Left cardiac atrium (tissue), 4 donors: ENCODE measurements at regions of chr1 and their contacts with region 1.

Region 1: GRCh38 chr1:36285448-36286101 is 20.6 kb upstream of the SH3D21 start:
- DNase-seq: peak; percentile 63
- ATAC-seq: peak; percentile 78 to 88

Region 2: DNA sequence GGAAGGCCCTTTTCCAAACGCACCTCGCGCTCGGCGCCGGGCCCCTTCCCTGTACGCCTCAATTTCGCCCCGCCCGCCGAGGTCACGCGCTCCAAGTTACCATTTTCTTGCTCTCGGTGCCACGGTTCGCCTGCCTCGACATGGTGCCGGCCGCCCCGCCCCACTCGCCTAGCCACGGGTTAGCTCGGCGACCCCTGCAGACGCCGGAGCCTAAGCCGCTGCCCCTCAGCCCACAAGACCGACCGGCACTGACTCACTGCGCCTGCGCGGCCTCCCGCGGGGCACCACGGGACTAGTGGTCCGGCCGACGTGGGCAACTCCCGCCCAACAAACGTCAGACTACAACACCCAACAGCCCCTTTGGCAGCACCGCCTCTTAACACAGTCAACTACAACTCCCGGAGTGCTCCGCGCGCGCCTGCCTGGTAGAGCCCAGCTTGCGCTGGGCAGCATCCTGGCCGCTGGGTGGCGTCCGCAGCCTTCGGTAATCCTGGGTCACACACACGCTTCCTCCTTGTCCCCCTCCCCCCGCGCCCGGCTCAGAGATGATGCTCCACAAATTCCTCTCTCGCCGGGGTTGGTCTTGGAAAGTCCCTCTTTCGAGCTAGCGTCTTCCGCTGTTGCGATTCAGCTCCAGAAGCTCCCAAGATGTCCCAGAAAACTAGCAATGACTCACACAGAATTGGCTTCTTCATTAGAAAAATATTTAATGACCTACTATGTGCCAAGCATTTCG is 136.2 kb before region 1 on chr1 and contains the start of gene TRAPPC3:
- intact Hi-C with region 1: loop called (anchors 2 to 10 kb)
- DNase-seq: peak; percentile 100
- ATAC-seq: peak; percentile 92 to 93
- total RNA-seq, gene TRAPPC3: 53.3 to 64.2 TPM

Region 3: GRCh38 chr1:36203554-36204346 is 81.8 kb before region 1 on chr1:
- intact Hi-C with region 1: loop called in 1 of 2 experiments (anchors 5 kb)
- DNase-seq: peak; percentile 71
- ATAC-seq: peak; percentile 74 to 83

Region 4: GRCh38 chr1:36223993-36224536 is 61.5 kb before region 1 on chr1 and contains the start of gene THRAP3:
- intact Hi-C with region 1: loop called in 1 of 2 experiments (anchors 10 kb)
- DNase-seq: peak; percentile 100
- ATAC-seq: peak; percentile 96 to 98
- total RNA-seq, gene THRAP3: 55.9 to 77.0 TPM